ENCODE measurements at regions of chr9 and their contacts with region 1.

Region 1: GRCh38 chr9:122810306-122810946 is 10.5 kb downstream of the OR1K1 start:
- DNase-seq: peak; percentile 47
- ATAC-seq: peak; percentile 95
- H3K4me3 ChIP-seq: no peak overlapping the region
- H3K27ac ChIP-seq: no peak overlapping the region
- H3K4me1 ChIP-seq: no peaks in the 10 kb centered on the region
- H3K27me3 ChIP-seq: no peaks in the 10 kb centered on the region
- CTCF ChIP-seq: peak; percentile 73

Region 2: DNA sequence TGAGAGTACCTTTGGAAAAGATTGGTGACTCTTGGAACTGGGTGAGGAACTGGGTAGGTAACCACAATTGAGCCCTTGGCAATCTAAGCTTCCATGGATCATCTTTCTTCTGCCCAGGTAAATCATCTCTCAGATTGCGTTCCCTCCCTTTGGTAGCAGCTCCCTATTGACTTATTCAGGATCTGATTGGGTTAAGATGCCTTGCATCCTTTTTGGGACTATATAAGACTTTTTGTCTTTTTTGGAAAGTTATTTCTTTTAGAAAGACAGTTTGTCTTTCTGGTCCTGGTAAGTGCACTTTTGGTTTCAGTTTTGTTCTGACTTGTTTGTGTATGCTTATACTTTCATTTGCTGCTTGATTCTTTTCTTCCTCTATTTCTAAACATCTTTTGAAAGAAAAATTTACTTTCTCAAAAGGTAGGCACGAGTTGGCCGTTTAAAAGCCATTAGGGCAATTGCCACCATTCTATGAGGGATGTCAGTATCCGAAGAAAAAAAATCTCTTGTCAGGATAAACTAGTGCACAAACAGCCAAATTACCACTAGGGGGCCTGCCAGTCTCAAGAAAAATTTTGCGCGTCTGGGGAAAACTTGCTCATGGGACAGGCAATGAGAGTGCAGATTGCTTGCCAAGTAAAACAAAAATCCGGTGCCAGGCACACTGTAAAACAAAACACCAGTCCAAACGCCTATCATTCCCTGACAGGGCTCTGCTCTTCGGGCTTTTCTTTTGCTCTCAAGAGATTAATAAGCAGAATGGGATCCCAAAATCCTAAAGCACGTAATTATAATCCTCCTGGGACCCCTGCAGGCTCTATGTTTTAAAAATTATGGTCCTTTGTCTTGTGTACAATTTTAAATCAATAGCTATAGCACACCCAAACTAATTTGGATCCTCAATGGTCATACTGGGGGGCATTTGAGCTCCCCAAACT is 345.5 kb before region 1 on chr9:
- CTCF ChIA-PET with region 1: no interaction called
- POLR2A ChIA-PET with region 1: no interaction called
- in situ Hi-C with region 1: no loop called
- intact Hi-C with region 1: loop called (anchors 1 kb)
- DNase-seq: no peak
- ATAC-seq: peak; percentile 90
- H3K4me3 ChIP-seq: peak overlapping the region; percentile 40 to 65
- H3K27ac ChIP-seq: no peak overlapping the region; the same call in 1 of the 2 replicates
- H3K4me1 ChIP-seq: no peaks in the 10 kb centered on the region
- H3K27me3 ChIP-seq: no peaks in the 10 kb centered on the region; the same call in 1 of the 2 replicates
- CTCF ChIP-seq: peak; percentile 80

Region 3: GRCh38 chr9:123225374-123225813 is 415.0 kb after region 1 on chr9:
- CTCF ChIA-PET with region 1: no interaction called
- POLR2A ChIA-PET with region 1: no interaction called
- in situ Hi-C with region 1: no loop called
- intact Hi-C with region 1: no loop called
- DNase-seq: peak; percentile 35
- ATAC-seq: peak; percentile 53; the same call in 1 of the 2 replicates
- H3K4me3 ChIP-seq: no peak overlapping the region
- H3K27ac ChIP-seq: no peak overlapping the region
- H3K4me1 ChIP-seq: no peaks in the 10 kb centered on the region
- H3K27me3 ChIP-seq: no peaks in the 10 kb centered on the region
- CTCF ChIP-seq: peak; percentile 59